ENCODE measurements at regions of chr10 and their contacts with region 1.

Region 1: GRCh38 chr10:69506834-69507721 is 55.8 kb downstream of the TSPAN15 start:
- DNase-seq: no peak
- H3K4me3 Mint-ChIP-seq: peak overlapping the region; percentile 72
- H3K27ac Mint-ChIP-seq: peak overlapping the region; percentile 53
- H3K4me1 Mint-ChIP-seq: peaks cover 9% of the 10 kb centered on the region
- H3K27me3 Mint-ChIP-seq: peaks cover 22% of the 10 kb centered on the region

Region 2: DNA sequence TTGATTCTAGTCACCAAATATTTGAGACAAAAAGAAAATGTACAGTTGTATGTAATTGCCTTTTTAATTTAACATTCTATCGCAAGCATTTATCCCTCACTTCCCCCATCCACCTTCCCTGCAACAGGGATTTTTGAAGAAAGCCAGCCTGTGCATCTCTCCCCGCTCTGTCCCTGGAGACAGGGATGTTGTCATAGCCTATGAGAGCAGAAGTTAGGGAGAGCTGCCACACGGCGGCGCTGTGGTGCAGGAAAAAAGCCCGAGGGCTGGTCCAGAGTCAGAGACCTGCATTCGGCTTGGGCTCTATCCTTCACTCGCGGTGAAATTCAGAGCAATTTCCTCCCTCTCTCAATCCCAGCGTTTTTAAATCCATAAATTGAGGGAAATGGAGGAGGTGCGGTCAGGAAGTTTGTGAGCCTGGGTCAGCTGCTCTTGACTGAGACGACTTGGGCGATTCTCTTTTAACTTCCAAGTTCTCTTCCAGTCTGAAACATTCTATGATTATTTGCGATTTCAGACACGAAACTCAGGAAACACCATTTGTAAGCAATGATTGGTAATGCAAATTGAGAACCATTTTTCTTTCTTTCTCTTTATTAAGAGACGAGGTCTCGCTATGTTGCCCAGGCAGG is 269.4 kb before region 1 on chr10:
- intact Hi-C with region 1: loop called (anchors 1 kb)
- DNase-seq: peak; percentile 96
- H3K4me3 Mint-ChIP-seq: no peak overlapping the region
- H3K27ac Mint-ChIP-seq: no peak overlapping the region
- H3K4me1 Mint-ChIP-seq: peaks cover 20% of the 10 kb centered on the region
- H3K27me3 Mint-ChIP-seq: no peaks in the 10 kb centered on the region

Region 3: GRCh38 chr10:69408318-69409175 is 98.5 kb before region 1 on chr10:
- intact Hi-C with region 1: loop called (anchors 1 kb)
- DNase-seq: peak; percentile 96
- H3K4me3 Mint-ChIP-seq: peak overlapping the region; percentile 80
- H3K27ac Mint-ChIP-seq: peak overlapping the region; percentile 90
- H3K4me1 Mint-ChIP-seq: peaks cover 20% of the 10 kb centered on the region
- H3K27me3 Mint-ChIP-seq: no peaks in the 10 kb centered on the region

Region 4: DNA sequence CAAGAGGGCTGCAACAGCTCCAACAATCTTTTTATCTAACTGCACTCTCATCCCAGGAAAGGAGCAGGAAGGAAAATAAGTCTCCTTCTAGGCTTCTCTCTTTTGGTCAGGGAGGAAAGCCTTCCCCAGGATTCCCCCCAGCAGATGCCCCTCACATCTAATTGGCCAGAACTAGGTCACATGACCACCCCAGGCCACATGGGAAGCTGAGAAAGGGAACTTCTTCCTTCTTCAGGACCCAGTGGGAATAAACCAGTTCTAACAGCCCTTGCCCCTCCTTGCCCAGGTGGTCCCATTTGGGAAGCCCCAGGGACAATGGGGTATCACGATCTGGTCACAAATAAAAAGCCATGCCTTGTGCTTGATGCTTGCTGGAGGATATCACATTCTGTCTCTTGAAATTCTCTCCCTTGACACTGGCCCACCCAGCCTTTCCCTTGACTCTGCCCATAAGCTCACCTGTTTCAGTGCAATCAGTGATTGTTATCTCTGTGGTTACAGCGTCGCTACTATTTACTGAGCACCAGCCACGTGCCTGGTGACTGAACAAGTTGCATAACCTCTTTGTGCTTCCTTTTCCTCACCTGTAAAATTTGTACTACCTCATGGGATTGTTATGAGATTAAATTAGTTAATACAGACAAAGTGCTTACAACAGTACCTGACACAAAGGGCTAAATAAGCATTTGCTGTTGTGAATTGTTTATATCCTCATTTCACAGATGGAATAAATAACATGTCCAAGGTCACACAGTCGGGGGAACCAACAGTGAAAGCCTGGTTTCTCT is 81.4 kb before region 1 on chr10:
- intact Hi-C with region 1: loop called (anchors 1 kb)
- DNase-seq: no peak
- H3K4me3 Mint-ChIP-seq: no peak overlapping the region
- H3K27ac Mint-ChIP-seq: peak overlapping the region; percentile 29
- H3K4me1 Mint-ChIP-seq: peaks cover 31% of the 10 kb centered on the region
- H3K27me3 Mint-ChIP-seq: no peaks in the 10 kb centered on the region

Region 5: DNA sequence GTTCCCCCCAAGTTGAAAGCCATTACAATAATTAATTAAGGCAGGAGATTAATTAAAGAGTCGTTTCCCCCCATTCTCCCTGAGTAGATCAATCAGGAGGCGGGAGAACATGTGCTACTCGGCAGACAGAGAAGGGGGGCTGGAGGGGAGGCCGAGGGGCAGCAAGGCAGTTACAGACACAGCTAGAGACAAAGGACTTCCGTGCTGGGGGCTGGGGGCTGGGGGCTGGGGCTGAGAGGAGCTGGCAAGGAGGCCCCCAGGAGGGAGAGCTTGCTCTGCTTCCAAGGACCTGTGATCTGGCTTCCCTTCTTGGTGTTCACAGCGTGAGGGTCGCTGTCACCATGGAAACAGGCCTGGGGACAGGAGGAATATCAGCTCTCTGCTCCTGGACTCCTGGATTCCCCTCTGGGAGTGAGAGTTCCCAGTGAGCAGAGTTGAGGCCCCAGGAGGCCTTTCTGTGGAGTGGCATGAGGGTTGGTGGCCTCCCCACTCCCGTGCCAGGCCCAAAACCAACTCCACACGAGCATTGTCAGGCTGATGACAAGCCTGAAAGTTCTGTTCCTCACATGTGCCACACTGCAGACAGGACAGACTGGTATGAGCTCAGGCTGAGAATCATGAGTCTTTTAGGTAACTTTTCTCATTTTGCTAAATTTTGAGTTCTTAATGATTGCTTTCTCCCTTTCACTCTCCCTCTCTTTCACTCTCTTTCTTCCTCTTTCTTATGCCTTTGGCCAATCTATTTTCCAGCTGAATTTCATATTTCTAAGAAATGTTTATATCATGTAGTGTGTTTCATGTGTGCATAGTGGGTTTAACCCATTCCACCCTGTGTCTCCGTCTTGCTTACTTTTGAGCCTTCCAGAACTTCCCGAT is 139.3 kb after region 1 on chr10:
- intact Hi-C with region 1: no loop called
- DNase-seq: no peak
- H3K4me3 Mint-ChIP-seq: no peak overlapping the region
- H3K27ac Mint-ChIP-seq: no peak overlapping the region
- H3K4me1 Mint-ChIP-seq: peaks cover 10% of the 10 kb centered on the region
- H3K27me3 Mint-ChIP-seq: peaks cover 4% of the 10 kb centered on the region

Region 6: GRCh38 chr10:69957886-69958555 is 450.9 kb after region 1 on chr10:
- intact Hi-C with region 1: no loop called
- DNase-seq: peak; percentile 76
- H3K4me3 Mint-ChIP-seq: no peak overlapping the region
- H3K27ac Mint-ChIP-seq: no peak overlapping the region
- H3K4me1 Mint-ChIP-seq: no peaks in the 10 kb centered on the region
- H3K27me3 Mint-ChIP-seq: peaks cover 9% of the 10 kb centered on the region